ENCODE measurements at regions of chr12 and their contacts with region 1.

Region 1: GRCh38 chr12:64256166-64256800 is 34.2 kb upstream of the KICS2 start:
- H3K4me3 ChIP-seq: no peak overlapping the region
- H3K27ac ChIP-seq: no peak overlapping the region
- H3K4me1 ChIP-seq: no peaks in the 10 kb centered on the region
- CTCF ChIP-seq: peak; percentile 18; the same call in 1 of the 2 replicates

Region 2: GRCh38 chr12:63826006-63826585 is 430.2 kb before region 1 on chr12:
- CTCF ChIA-PET with region 1: interaction called, 27 read pairs
- POLR2A ChIA-PET with region 1: no interaction called
- H3K4me3 ChIP-seq: no peak overlapping the region
- H3K27ac ChIP-seq: no peak overlapping the region
- H3K4me1 ChIP-seq: no peaks in the 10 kb centered on the region
- CTCF ChIP-seq: peak; percentile 44

Region 3: GRCh38 chr12:63836936-63837335 is 419.3 kb before region 1 on chr12:
- CTCF ChIA-PET with region 1: interaction called, 32 read pairs
- POLR2A ChIA-PET with region 1: no interaction called
- H3K4me3 ChIP-seq: no peak overlapping the region
- H3K27ac ChIP-seq: no peak overlapping the region
- H3K4me1 ChIP-seq: no peaks in the 10 kb centered on the region
- CTCF ChIP-seq: no peak

Region 4: DNA sequence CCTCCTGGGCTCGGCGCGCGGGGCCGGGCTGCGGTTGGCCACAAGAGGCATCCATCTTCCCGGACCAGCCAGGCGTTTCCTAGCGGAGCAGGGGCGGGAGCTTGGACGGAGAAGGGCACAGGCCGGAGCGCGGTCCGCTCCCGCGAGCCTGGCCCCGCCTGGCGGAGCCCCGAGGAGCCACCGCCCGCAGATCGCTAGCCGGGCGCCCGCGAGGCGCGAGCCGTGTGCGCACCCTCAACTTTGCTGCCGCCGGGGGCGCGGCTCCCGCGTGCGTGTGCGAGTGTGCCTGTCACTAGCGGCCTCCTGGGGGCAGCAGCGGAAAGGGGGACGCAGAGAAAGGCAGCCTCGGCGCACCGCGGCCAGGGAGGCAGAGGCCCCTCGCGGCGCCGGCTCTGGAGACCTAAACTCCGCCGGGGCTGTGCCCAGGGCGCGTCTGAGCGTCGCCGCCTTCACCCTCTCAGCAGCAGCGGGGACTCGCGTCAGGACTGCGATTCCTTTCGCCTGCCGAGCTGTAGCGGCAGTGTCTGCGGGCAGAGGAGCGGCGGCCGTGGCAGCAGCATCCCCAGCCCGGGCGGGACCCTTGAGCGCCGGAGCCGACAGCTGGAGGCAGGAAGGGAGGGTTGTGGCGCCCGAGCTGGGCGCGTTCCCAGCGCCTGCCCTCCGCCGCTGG is 412.4 kb before region 1 on chr12:
- CTCF ChIA-PET with region 1: interaction called, 32 read pairs
- POLR2A ChIA-PET with region 1: no interaction called
- H3K4me3 ChIP-seq: peak overlapping the region; percentile 95
- H3K27ac ChIP-seq: peak overlapping the region; percentile 79
- H3K4me1 ChIP-seq: 0 out of 2 replicates have a peak, but pooled peaks cover 3% of the 10 kb centered on the region
- CTCF ChIP-seq: peak; percentile 100

Region 5: GRCh38 chr12:64127811-64128210 is 128.5 kb before region 1 on chr12:
- CTCF ChIA-PET with region 1: no interaction called
- POLR2A ChIA-PET with region 1: no interaction called
- H3K4me3 ChIP-seq: no peak overlapping the region
- H3K27ac ChIP-seq: no peak overlapping the region
- H3K4me1 ChIP-seq: no peaks in the 10 kb centered on the region
- CTCF ChIP-seq: no peak